Dendritic cell treated with granulocyte-macrophage colony-stimulating factor and Interleukin-4, amounts not matched to agents 40 ng/mL and 50 ng/mL, for 4 days (primary cell): ENCODE measurements at regions of chr1 and their contacts with region 1.

Region 1: GRCh38 chr1:155250633-155251449 is 4.4 kb downstream of the ENTREP3 start:
- H3K4me3 Mint-ChIP-seq: peak overlapping the region; percentile 59
- H3K27ac Mint-ChIP-seq: peak overlapping the region; percentile 80
- H3K4me1 Mint-ChIP-seq: peaks cover 41% of the 10 kb centered on the region
- H3K27me3 Mint-ChIP-seq: no peaks in the 10 kb centered on the region

Region 2: GRCh38 chr1:155208541-155209311 is 42.1 kb before region 1 on chr1 and contains the start of gene MTX1:
- intact Hi-C with region 1: no loop called
- H3K4me3 Mint-ChIP-seq: peak within 1 kb of the TSS; percentile 94
- H3K27ac Mint-ChIP-seq: peak within 1 kb of the TSS; percentile 97
- H3K4me1 Mint-ChIP-seq: peaks cover 51% of the 10 kb centered on the region
- H3K27me3 Mint-ChIP-seq: no peaks in the 10 kb centered on the region

Region 3: DNA sequence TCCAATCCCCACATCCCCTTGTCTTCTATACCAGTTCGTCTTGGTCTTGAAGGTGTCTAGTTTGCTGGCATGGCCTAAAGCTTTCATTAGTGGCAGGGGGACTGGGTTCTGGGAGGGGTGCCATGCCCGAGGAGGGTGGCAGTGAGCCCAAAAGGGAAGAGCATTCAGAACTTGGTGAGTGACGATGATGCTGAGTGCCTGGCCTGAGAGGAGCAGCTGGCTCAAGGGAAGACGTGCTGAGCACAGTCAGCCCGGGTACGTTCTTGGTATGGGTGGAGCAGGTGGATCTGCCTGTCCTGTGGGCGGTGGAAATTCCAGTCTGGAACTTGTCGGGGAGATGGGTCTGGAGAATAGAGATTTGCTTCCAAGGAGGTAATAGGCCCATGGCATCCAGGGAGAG is 62.4 kb after region 1 on chr1:
- intact Hi-C with region 1: no loop called
- H3K4me3 Mint-ChIP-seq: no peak overlapping the region
- H3K27ac Mint-ChIP-seq: no peak overlapping the region
- H3K4me1 Mint-ChIP-seq: peaks cover 38% of the 10 kb centered on the region
- H3K27me3 Mint-ChIP-seq: no peaks in the 10 kb centered on the region

Region 4: GRCh38 chr1:155323798-155324610 is 73.2 kb after region 1 on chr1:
- intact Hi-C with region 1: loop called (anchors 2 kb)
- H3K4me3 Mint-ChIP-seq: peak overlapping the region; percentile 92
- H3K27ac Mint-ChIP-seq: peak overlapping the region; percentile 89
- H3K4me1 Mint-ChIP-seq: peaks cover 58% of the 10 kb centered on the region
- H3K27me3 Mint-ChIP-seq: peaks cover 6% of the 10 kb centered on the region

Region 5: DNA sequence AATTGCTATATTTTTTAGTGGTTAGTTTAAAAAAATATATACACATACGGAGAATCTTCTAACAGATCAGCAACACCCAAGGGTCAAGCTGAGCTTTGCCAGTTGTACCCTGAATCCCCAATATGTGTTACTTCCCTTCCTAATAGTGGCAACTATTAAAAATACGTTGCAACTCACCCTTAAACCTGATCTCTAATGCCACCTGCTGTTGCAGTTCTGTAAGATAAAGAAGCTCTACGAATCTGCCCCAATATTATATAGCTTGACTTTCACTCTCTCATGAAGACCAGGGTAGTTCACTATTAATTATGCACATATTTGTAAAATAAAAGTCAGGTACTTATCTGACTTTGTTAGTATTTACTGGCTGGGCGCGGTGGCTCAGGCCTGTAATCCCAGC is 253.4 kb after region 1 on chr1:
- intact Hi-C with region 1: loop called (anchors 5 kb)
- H3K4me3 Mint-ChIP-seq: no peak overlapping the region
- H3K27ac Mint-ChIP-seq: no peak overlapping the region
- H3K4me1 Mint-ChIP-seq: peaks cover 20% of the 10 kb centered on the region
- H3K27me3 Mint-ChIP-seq: no peaks in the 10 kb centered on the region

Region 6: GRCh38 chr1:155591770-155592169 is 340.9 kb after region 1 on chr1:
- intact Hi-C with region 1: loop called (anchors 5 kb)
- H3K4me3 Mint-ChIP-seq: no peak overlapping the region
- H3K27ac Mint-ChIP-seq: no peak overlapping the region
- H3K4me1 Mint-ChIP-seq: no peaks in the 10 kb centered on the region
- H3K27me3 Mint-ChIP-seq: no peaks in the 10 kb centered on the region